Psoas muscle (tissue), 8 donors: ENCODE measurements at regions of chr2 and their contacts with region 1.

Region 1: DNA sequence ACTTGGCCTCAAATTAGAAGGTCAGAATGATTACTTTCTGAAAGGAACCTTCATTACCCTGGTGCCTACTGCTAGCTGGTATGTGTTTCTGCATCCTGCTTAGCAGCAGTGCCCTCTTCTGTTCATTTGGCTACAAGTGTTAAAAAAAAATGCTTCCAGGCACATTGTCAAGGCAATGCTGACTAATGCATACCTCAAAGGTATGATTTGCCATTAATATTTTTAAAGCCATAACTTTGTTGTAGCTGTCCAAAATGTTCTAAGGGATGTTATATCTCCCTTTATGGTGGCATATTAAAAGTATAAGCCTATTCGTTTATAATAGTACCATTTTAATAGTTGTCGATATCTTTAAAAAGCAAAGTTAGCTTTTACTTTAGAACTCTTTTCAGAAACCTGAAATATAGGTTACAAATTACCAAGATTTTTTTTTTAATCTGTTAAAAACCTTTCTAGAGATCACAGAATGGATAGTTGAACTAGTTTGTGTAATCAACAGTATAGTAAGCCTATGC is 52.0 kb upstream of the FAM171B start:
- DNase-seq: no peak
- ATAC-seq: peak; percentile 87 to 98 (median 93)
- H3K4me3 ChIP-seq: no peak overlapping the region
- H3K27ac ChIP-seq: no peak overlapping the region
- H3K4me1 ChIP-seq: no peaks in the 10 kb centered on the region
- H3K27me3 ChIP-seq: no peaks in the 10 kb centered on the region
- CTCF ChIP-seq: peak; percentile 79

Region 2: DNA sequence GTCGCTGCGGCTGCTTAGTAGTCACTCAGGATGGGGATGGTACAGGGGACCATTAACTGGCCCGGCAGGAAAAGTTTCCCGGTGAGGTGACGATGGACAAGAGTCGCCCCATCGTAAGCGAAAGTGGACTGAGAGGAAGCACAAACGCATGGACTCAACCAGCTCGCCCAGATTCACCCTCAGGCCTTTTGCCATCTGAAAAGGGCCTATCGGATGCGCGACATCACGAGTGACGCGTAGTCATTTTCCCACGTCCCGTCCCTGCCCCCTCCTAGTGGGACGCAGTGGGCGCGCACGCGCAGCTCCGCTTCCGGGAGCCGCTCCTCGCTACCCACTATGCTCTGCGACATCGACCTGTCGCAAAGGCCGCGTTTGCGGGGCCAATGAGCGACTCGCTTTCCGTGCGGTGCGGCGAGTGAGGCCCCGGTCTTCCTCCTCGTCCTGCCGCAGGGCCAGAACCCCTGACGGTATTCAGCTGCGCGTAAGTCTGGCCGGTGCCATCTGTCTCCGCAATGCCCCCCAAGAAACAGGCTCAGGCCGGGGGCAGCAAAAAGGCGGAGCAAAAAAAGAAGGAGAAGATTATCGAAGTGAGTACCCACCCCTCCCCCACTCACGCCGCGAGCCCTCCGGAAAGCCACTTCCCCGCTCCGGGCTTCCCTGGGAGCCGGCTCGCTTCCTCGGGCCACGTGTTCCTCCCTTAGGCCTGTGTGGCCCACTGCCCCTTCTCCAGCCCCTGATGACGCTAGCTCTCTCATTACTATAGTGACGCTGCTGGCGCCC is 155.8 kb before region 1 on chr2 and contains the start of gene ZC3H15:
- intact Hi-C with region 1: loop called in 1 of 2 experiments (anchors 5 kb)
- DNase-seq: peak; percentile 98 to 99
- ATAC-seq: peak; percentile 98
- H3K4me3 ChIP-seq: peak within 1 kb of the TSS; percentile 72
- H3K27ac ChIP-seq: peak within 1 kb of the TSS; percentile 94
- H3K4me1 ChIP-seq: peaks cover 40% of the 10 kb centered on the region
- H3K27me3 ChIP-seq: no peaks in the 10 kb centered on the region
- CTCF ChIP-seq: no peak
- total RNA-seq, gene ZC3H15: 31.1 to 56.3 (median 51.2) TPM

Region 3: GRCh38 chr2:186503848-186504606 is 137.8 kb before region 1 on chr2:
- intact Hi-C with region 1: loop called (anchors 2 to 5 kb)
- DNase-seq: no peak
- ATAC-seq: peak in 1 of 4 donors; percentile 56
- H3K4me3 ChIP-seq: no peak overlapping the region
- H3K27ac ChIP-seq: no peak overlapping the region
- H3K4me1 ChIP-seq: no peaks in the 10 kb centered on the region
- H3K27me3 ChIP-seq: no peaks in the 10 kb centered on the region
- CTCF ChIP-seq: peak; percentile 58

Region 4: DNA sequence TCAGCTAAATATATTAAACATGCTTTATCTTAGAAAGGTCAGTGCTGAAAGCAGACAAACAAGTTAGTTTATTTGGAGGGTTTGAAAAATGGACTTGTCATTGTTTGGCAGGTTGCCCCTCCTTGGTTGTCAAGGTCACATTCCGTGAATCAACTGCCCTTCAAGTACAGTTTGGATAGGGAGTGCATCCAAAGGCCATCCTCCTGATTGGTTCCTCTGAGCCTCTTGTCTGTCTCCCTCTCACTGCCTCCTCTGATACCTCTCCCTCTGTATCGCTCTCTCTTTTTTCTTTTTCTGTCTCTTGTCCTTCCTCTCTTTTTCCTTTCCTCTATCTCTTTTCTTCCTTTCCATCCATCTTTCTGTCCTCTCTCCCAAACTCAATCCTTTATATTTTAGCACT is 46.6 kb before region 1 on chr2:
- intact Hi-C with region 1: loop called (anchors 5 kb)
- DNase-seq: peak in 1 of 2 donors; percentile 14
- ATAC-seq: no peak
- H3K4me3 ChIP-seq: no peak overlapping the region
- H3K27ac ChIP-seq: peak overlapping the region; percentile 68
- H3K4me1 ChIP-seq: peaks cover 28% of the 10 kb centered on the region
- H3K27me3 ChIP-seq: no peaks in the 10 kb centered on the region
- CTCF ChIP-seq: no peak